ENCODE measurements at regions of chr3 and their contacts with region 1.

Region 1: GRCh38 chr3:119401503-119402372 is 61.7 kb downstream of the TMEM39A start:
- DNase-seq: no peak
- H3K4me3 ChIP-seq: no peak overlapping the region
- H3K4me3 Mint-ChIP-seq: no peak overlapping the region
- H3K27ac ChIP-seq: no peak overlapping the region
- H3K27ac Mint-ChIP-seq: peak overlapping the region in 2 of 7 donors; percentile 9 to 58
- H3K4me1 ChIP-seq: no peaks in the 10 kb centered on the region
- H3K4me1 Mint-ChIP-seq: peaks cover 2% of the 10 kb centered on the region
- H3K27me3 ChIP-seq: no peaks in the 10 kb centered on the region
- H3K27me3 Mint-ChIP-seq: peaks cover 0 to 1% (median 0%) of the 10 kb centered on the region in 3 donors
- CTCF ChIP-seq: no peak

Region 2: DNA sequence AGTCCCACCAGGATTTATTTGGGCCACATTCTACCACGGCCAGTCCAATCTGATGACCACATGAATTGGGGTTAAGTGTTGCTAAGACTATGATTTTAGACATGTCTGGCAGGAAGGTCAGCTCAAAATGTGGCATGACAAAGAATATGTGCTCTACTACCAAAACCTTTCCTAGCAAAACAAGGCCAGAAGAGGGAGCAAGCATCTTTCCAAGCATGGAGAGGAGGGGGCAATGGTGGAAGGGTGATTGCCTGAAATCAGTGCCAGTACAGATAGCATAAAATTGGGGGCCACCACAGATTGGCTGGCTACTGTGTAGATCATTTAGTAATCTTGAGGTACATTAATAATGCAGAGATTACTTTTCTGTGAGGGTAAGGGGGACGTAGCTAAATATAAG is 18.5 kb after region 1 on chr3:
- intact Hi-C with region 1: no loop called
- DNase-seq: no peak
- H3K4me3 ChIP-seq: no peak overlapping the region
- H3K4me3 Mint-ChIP-seq: no peak overlapping the region
- H3K27ac ChIP-seq: no peak overlapping the region
- H3K27ac Mint-ChIP-seq: peak overlapping the region in 1 of 7 donors; percentile 52
- H3K4me1 ChIP-seq: no peaks in the 10 kb centered on the region
- H3K4me1 Mint-ChIP-seq: peaks cover 3% of the 10 kb centered on the region
- H3K27me3 ChIP-seq: no peaks in the 10 kb centered on the region
- H3K27me3 Mint-ChIP-seq: no peaks in the 10 kb centered on the region
- CTCF ChIP-seq: no peak

Region 3: DNA sequence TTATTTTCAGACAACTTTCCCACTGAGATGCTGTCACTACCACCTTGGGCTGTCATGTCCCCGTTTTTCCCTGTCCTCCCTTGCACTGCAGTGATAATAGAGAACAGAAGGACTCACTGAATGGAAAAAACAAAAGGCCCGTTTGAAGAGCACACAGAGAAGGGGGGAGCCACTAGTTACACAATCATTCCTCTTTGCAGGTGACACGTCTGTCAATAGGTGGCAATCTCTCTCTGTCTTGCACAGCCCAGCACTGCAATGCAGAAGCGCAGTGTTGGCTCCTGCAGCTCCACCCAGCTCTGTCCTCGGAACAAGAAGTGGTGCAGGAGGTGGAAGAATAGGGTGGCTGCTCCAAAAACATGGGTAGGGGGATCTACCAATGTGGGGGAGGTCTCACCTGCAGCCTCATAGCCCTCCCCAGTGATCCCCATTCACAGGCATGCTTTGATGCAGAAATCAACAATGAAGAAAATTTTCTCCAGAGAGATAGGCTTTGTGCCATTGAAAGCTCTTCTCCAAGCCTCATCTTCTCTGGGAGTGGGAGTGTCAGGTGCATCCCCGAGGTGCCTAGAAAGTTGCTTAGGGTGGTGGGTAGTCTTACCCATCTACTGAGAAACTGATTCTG is 1017.2 kb after region 1 on chr3:
- intact Hi-C with region 1: no loop called
- DNase-seq: peak in 1 of 3 donors; percentile 9
- H3K4me3 ChIP-seq: no peak overlapping the region
- H3K4me3 Mint-ChIP-seq: no peak overlapping the region
- H3K27ac ChIP-seq: no peak overlapping the region
- H3K27ac Mint-ChIP-seq: peak overlapping the region in 1 of 7 donors; percentile 59
- H3K4me1 ChIP-seq: peaks cover 16 to 23% of the 10 kb centered on the region in 2 donors
- H3K4me1 Mint-ChIP-seq: peaks cover 20% of the 10 kb centered on the region
- H3K27me3 ChIP-seq: no peaks in the 10 kb centered on the region
- H3K27me3 Mint-ChIP-seq: peaks cover 0 to 4% (median 2%) of the 10 kb centered on the region in 3 donors
- CTCF ChIP-seq: no peak

Region 4: DNA sequence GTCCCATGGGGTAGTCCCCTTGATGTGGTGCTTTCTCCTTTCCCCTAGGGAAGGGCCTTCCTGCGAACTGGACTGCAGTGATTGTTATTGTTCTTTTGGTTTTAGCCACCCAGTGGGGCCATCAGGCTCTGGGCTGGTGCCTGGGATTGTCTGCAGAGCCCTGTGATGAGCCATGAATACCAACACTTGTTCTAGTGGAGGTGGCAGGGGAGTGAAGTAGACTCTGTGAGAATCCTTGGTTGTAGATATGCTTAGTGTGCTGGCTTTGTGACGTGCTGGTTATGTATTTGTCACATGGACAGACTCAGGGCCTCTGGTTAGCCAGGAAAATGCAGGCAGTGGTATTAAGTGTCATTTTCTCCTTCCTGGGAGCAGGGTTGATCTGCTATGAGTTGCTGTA is 1142.6 kb after region 1 on chr3:
- intact Hi-C with region 1: loop called in 1 of 2 experiments (anchors 10 kb)
- DNase-seq: no peak
- H3K4me3 ChIP-seq: no peak overlapping the region
- H3K4me3 Mint-ChIP-seq: no peak overlapping the region
- H3K27ac ChIP-seq: no peak overlapping the region
- H3K27ac Mint-ChIP-seq: no peak overlapping the region
- H3K4me1 ChIP-seq: no peaks in the 10 kb centered on the region
- H3K4me1 Mint-ChIP-seq: no peaks in the 10 kb centered on the region
- H3K27me3 ChIP-seq: no peaks in the 10 kb centered on the region
- H3K27me3 Mint-ChIP-seq: peaks cover 2 to 10% (median 5%) of the 10 kb centered on the region in 3 donors
- CTCF ChIP-seq: no peak

Measured in CD14-positive monocyte (primary cell).